CD14-positive monocyte (primary cell): ENCODE measurements at regions of chr2 and their contacts with region 1.

Region 1: GRCh38 chr2:207166039-207166348 is 246 bp upstream of the KLF7 start:
- DNase-seq: peak; percentile 97 to 98 (median 98)
- H3K4me3 ChIP-seq: peak overlapping the region; percentile 45 to 91 (median 80)
- H3K4me3 Mint-ChIP-seq: peak overlapping the region; percentile 97
- H3K27ac ChIP-seq: peak overlapping the region; percentile 92 to 96
- H3K27ac Mint-ChIP-seq: peak overlapping the region; percentile 99 to 100 (median 100)
- H3K4me1 ChIP-seq: peaks cover 43 to 48% of the 10 kb centered on the region in 2 donors
- H3K4me1 Mint-ChIP-seq: peaks cover 45% of the 10 kb centered on the region
- H3K27me3 ChIP-seq: no peaks in the 10 kb centered on the region
- H3K27me3 Mint-ChIP-seq: peaks cover 0 to 2% (median 1%) of the 10 kb centered on the region in 3 donors
- CTCF ChIP-seq: no peak

Region 2: GRCh38 chr2:207091176-207091575 is 74.8 kb before region 1 on chr2:
- intact Hi-C with region 1: no loop called
- DNase-seq: no peak
- H3K4me3 ChIP-seq: no peak overlapping the region
- H3K4me3 Mint-ChIP-seq: no peak overlapping the region
- H3K27ac ChIP-seq: peak overlapping the region in 1 of 2 donors; percentile 40
- H3K27ac Mint-ChIP-seq: peak overlapping the region in 1 of 7 donors; percentile 12
- H3K4me1 ChIP-seq: peaks cover 0 to 10% of the 10 kb centered on the region in 2 donors
- H3K4me1 Mint-ChIP-seq: peaks cover 19% of the 10 kb centered on the region
- H3K27me3 ChIP-seq: no peaks in the 10 kb centered on the region
- H3K27me3 Mint-ChIP-seq: peaks cover 0 to 3% (median 0%) of the 10 kb centered on the region in 3 donors
- CTCF ChIP-seq: no peak

Region 3: DNA sequence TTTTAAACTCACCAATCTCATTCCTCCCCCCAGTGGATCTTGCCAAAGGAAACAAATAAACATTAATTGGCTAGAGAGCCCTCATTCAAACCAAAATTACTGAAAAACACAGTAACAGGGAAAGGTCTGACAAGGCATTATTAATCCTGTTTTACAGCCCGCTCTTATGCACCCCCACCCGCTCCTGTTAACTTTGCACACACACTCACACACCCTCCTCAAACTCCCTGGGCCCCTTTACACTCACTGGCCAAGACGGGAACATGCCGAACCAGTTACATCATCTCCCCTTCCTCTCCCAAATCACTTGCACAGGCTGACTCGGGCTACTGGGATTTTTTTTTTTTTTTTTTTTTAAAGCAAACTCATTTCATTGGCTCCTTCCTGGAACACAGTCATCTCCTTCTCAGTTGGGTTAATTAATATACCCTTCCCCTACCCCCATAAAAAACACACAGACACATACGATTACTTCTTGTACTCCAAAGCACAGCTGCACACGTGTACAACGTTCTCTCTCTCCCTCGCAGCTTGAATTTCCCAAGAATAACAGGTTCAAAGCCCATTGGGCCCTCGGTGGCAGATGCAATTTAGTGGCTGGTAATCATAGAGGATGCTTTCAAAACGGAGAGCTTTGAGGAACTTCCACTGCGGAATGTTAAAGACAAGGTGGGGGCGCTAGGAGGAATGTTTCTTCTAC is 32.0 kb before region 1 on chr2:
- intact Hi-C with region 1: loop called in 1 of 2 experiments (anchors 5 kb)
- DNase-seq: peak in 1 of 3 donors; percentile 61
- H3K4me3 ChIP-seq: peak overlapping the region in 1 of 3 experiments; percentile 21
- H3K4me3 Mint-ChIP-seq: peak overlapping the region in 1 of 2 donors; percentile 28
- H3K27ac ChIP-seq: peak overlapping the region in 1 of 2 donors; percentile 84
- H3K27ac Mint-ChIP-seq: peak overlapping the region in 6 of 7 donors; percentile 39 to 83 (median 62)
- H3K4me1 ChIP-seq: peaks cover 76 to 98% of the 10 kb centered on the region in 2 donors
- H3K4me1 Mint-ChIP-seq: peaks cover 91% of the 10 kb centered on the region
- H3K27me3 ChIP-seq: no peaks in the 10 kb centered on the region
- H3K27me3 Mint-ChIP-seq: peaks cover 0 to 2% (median 0%) of the 10 kb centered on the region in 3 donors
- CTCF ChIP-seq: no peak

Region 4: DNA sequence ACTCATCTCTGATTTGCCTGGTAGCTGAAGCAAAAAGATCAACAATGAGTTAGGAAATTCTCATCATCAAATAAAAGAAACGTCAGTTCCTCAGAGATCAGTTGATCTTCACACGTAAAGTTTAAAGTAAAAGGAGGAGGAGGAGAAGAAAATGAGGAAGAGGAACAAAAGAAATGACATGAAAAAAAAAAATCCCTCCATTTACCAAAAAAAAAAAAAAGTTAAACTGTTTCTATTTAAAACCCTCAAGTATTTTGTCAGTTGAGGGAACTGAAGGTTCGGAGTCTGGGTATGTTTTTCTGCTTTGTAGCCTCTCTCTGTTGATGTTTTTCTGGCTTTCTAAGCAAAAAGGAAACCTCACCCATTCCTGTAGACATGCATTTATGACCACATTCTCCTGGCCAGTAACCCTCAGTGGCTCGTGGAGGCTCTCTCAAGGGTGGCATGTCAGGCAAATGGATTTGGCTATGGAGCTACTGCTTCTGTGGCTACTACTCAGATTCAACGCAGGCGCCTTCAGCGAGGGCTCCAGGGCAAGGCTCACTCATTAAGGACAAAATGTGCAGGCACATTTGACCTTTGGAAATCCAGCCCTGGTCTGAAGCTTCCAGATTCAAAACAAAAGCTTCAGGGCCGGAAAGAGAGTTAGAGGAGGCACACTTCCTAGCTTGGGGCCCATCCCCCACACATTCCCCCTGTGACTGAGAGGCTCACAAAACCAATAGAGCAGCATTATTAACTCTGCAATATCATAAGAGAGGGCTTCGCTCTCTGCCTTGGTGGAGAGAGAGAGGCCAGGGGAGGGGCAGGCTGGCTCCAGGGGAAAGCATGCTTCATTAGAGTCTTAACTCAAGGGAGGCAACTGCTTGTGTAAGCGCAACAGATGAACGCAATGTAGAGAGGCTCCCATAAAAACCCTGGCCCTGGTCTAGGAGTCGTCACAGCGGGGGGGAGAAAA is 22.5 kb before region 1 on chr2:
- intact Hi-C with region 1: loop called in 1 of 2 experiments (anchors 2 kb)
- DNase-seq: peak; percentile 73 to 85 (median 82)
- H3K4me3 ChIP-seq: peak overlapping the region; percentile 23 to 67 (median 35)
- H3K4me3 Mint-ChIP-seq: peak overlapping the region; percentile 70 to 76
- H3K27ac ChIP-seq: peak overlapping the region; percentile 97 to 99
- H3K27ac Mint-ChIP-seq: peak overlapping the region; percentile 96 to 100 (median 97)
- H3K4me1 ChIP-seq: peaks cover 72 to 75% of the 10 kb centered on the region in 2 donors
- H3K4me1 Mint-ChIP-seq: peaks cover 78% of the 10 kb centered on the region
- H3K27me3 ChIP-seq: no peaks in the 10 kb centered on the region
- H3K27me3 Mint-ChIP-seq: no peaks in the 10 kb centered on the region
- CTCF ChIP-seq: no peak

Region 5: GRCh38 chr2:207238831-207239701 is 73.1 kb after region 1 on chr2:
- intact Hi-C with region 1: loop called in 1 of 2 experiments (anchors 5 kb)
- DNase-seq: peak; percentile 77 to 90 (median 78)
- H3K4me3 ChIP-seq: peak overlapping the region in 1 of 3 experiments; percentile 42
- H3K4me3 Mint-ChIP-seq: peak overlapping the region; percentile 52 to 55
- H3K27ac ChIP-seq: peak overlapping the region; percentile 65 to 81
- H3K27ac Mint-ChIP-seq: peak overlapping the region in 2 of 7 donors; percentile 90 to 95
- H3K4me1 ChIP-seq: peaks cover 69 to 75% of the 10 kb centered on the region in 2 donors
- H3K4me1 Mint-ChIP-seq: peaks cover 8% of the 10 kb centered on the region
- H3K27me3 ChIP-seq: no peaks in the 10 kb centered on the region
- H3K27me3 Mint-ChIP-seq: no peaks in the 10 kb centered on the region
- CTCF ChIP-seq: no peak

Region 6: GRCh38 chr2:207258263-207258991 is 92.4 kb after region 1 on chr2:
- intact Hi-C with region 1: loop called in 1 of 2 experiments (anchors 5 kb)
- DNase-seq: peak; percentile 39 to 52 (median 51)
- H3K4me3 ChIP-seq: peak overlapping the region in 1 of 3 experiments; percentile 46
- H3K4me3 Mint-ChIP-seq: peak overlapping the region; percentile 42 to 81
- H3K27ac ChIP-seq: peak overlapping the region; percentile 13 to 76
- H3K27ac Mint-ChIP-seq: peak overlapping the region in 6 of 7 donors; percentile 45 to 86 (median 74)
- H3K4me1 ChIP-seq: peaks cover 55 to 56% of the 10 kb centered on the region in 2 donors
- H3K4me1 Mint-ChIP-seq: peaks cover 54% of the 10 kb centered on the region
- H3K27me3 ChIP-seq: no peaks in the 10 kb centered on the region
- H3K27me3 Mint-ChIP-seq: peaks cover 0 to 2% (median 0%) of the 10 kb centered on the region in 3 donors
- CTCF ChIP-seq: no peak

Region 7: DNA sequence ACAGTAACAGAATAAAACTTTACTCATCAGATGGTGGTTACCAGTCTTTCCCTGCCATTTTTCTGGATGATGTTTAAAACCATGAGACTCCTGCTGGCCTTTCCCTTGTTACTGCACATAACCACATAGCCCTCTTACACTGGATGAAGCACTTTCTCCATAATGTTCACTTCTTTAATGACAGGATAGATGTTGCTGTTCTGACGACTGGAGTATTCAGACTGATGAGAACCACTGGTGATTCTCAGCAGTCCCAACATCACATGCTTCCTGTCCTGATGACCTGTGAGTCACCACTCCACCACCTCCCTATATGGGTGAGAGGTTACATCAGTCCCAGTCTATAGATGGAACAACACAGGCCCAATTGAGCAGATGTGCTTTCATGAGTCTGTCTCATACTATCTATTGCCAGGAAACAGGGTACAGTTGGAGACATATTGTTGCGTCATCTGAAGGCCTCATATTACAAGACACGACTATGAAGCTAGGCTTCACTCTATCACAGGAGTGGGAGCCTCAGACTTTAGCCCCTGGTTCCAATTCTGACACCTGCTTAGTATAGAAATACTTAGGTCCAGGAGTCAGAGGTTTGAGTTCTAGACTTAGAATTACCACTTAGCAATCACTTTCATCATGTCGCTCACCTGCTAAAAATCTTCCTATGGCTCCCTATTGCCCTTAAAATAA is 145.5 kb after region 1 on chr2:
- intact Hi-C with region 1: loop called in 1 of 2 experiments (anchors 10 kb)
- DNase-seq: peak; percentile 96 to 99 (median 99)
- H3K4me3 ChIP-seq: no peak overlapping the region
- H3K4me3 Mint-ChIP-seq: no peak overlapping the region
- H3K27ac ChIP-seq: peak overlapping the region; percentile 24 to 85
- H3K27ac Mint-ChIP-seq: peak overlapping the region; percentile 90 to 96 (median 94)
- H3K4me1 ChIP-seq: peaks cover 17 to 19% of the 10 kb centered on the region in 2 donors
- H3K4me1 Mint-ChIP-seq: peaks cover 25% of the 10 kb centered on the region
- H3K27me3 ChIP-seq: no peaks in the 10 kb centered on the region
- H3K27me3 Mint-ChIP-seq: peaks cover 0 to 5% (median 1%) of the 10 kb centered on the region in 3 donors
- CTCF ChIP-seq: peak; percentile 57

Region 8: DNA sequence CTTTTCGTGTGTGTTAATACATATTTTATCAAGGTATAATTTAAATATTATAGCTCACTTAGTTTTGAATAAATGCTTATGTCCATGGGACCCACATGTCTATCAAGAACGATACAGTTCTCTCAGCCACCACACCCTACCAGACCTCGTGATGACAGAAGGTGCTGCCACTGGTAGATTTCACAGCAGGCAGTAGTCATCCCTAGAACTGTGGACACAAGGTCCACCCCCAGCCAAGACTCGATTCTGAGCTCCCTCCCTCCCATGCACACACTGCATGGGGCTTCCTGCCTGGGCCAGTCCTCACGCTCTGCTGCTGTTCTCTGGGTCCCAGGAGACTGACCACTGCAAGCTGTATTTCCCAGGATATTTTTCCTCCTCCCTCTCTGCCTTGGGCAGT is 337.2 kb after region 1 on chr2:
- intact Hi-C with region 1: loop called (anchors 10 kb)
- DNase-seq: peak; percentile 66 to 81 (median 80)
- H3K4me3 ChIP-seq: peak overlapping the region in 1 of 3 experiments; percentile 33
- H3K4me3 Mint-ChIP-seq: peak overlapping the region in 1 of 2 donors; percentile 55
- H3K27ac ChIP-seq: peak overlapping the region; percentile 84 to 85
- H3K27ac Mint-ChIP-seq: peak overlapping the region; percentile 91 to 99 (median 98)
- H3K4me1 ChIP-seq: peaks cover 75 to 86% of the 10 kb centered on the region in 2 donors
- H3K4me1 Mint-ChIP-seq: peaks cover 85% of the 10 kb centered on the region
- H3K27me3 ChIP-seq: no peaks in the 10 kb centered on the region
- H3K27me3 Mint-ChIP-seq: peaks cover 0 to 6% (median 2%) of the 10 kb centered on the region in 3 donors
- CTCF ChIP-seq: no peak